MCF 10A (cell line): ENCODE measurements at regions of chr7 and their contacts with region 1.

Region 1: GRCh38 chr7:131007394-131008330 is 273.7 kb upstream of the KLF14 start:
- DNase-seq: peak; percentile 87
- H3K4me3 Mint-ChIP-seq: peak overlapping the region; percentile 15
- H3K27ac Mint-ChIP-seq: peak overlapping the region; percentile 84
- H3K4me1 Mint-ChIP-seq: peaks cover 46% of the 10 kb centered on the region
- H3K27me3 Mint-ChIP-seq: no peaks in the 10 kb centered on the region
- CTCF ChIP-seq: peak; percentile 58

Region 2: GRCh38 chr7:130476297-130477150 is 531.1 kb before region 1 on chr7:
- CTCF ChIA-PET with region 1: no interaction called
- POLR2A ChIA-PET with region 1: no interaction called
- intact Hi-C with region 1: no loop called
- DNase-seq: no peak
- H3K4me3 Mint-ChIP-seq: no peak overlapping the region
- H3K27ac Mint-ChIP-seq: no peak overlapping the region
- H3K4me1 Mint-ChIP-seq: no peaks in the 10 kb centered on the region
- H3K27me3 Mint-ChIP-seq: no peaks in the 10 kb centered on the region
- CTCF ChIP-seq: no peak

Region 3: GRCh38 chr7:130988443-130988842 is 19.2 kb before region 1 on chr7:
- CTCF ChIA-PET with region 1: interaction called, 102 read pairs
- POLR2A ChIA-PET with region 1: interaction called, 43 read pairs
- intact Hi-C with region 1: no loop called
- DNase-seq: no peak
- H3K4me3 Mint-ChIP-seq: no peak overlapping the region
- H3K27ac Mint-ChIP-seq: no peak overlapping the region
- H3K4me1 Mint-ChIP-seq: peaks cover 45% of the 10 kb centered on the region
- H3K27me3 Mint-ChIP-seq: no peaks in the 10 kb centered on the region
- CTCF ChIP-seq: no peak

Region 4: DNA sequence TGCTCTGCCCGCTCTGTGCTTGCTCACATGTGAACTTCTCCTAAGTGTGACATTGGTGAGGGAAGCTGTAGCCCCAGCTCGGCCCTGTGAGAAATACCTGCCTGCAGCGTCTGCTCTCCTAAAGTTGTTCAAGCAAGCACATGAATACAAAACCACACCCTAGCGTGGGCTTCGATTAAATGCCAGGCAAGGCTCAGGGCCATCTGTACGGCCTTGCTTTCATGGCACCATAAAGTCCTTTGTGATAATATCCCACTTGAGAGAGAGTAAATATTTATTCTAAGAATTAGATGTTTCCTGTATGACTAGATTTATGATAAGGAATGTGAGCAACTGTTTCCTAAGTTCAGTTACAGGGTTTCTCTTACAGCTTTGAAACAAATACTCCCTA is 10.8 kb before region 1 on chr7:
- CTCF ChIA-PET with region 1: interaction called, 24 read pairs
- POLR2A ChIA-PET with region 1: interaction called, 55 read pairs
- intact Hi-C with region 1: no loop called
- DNase-seq: peak; percentile 73
- H3K4me3 Mint-ChIP-seq: peak overlapping the region; percentile 21
- H3K27ac Mint-ChIP-seq: peak overlapping the region; percentile 96
- H3K4me1 Mint-ChIP-seq: peaks cover 54% of the 10 kb centered on the region
- H3K27me3 Mint-ChIP-seq: no peaks in the 10 kb centered on the region
- CTCF ChIP-seq: no peak